ENCODE measurements at regions of chrX and their contacts with region 1.

Region 1: GRCh38 chrX:50204364-50204899 is at the start of gene CCNB3:
- DNase-seq: peak; percentile 33
- ATAC-seq: peak; percentile 71
- H3K4me3 ChIP-seq: peak within 1 kb of the TSS in 1 of 3 experiments; percentile 16; a peak in 1 of 6 replicates
- H3K27ac ChIP-seq: no peak within 1 kb of the TSS
- H3K4me1 ChIP-seq: peaks cover 16% of the 10 kb centered on the region
- H3K27me3 ChIP-seq: no peaks in the 10 kb centered on the region
- CTCF ChIP-seq: peak; percentile 71
- EP300 ChIP-seq: no peak
- POLR2A ChIP-seq: no peak
- RAD21 ChIP-seq: peak; percentile 29; the same call in 1 of the 2 replicates
- total RNA-seq, gene CCNB3: 0.04 and 0.11 TPM in 2 replicates

Region 2: GRCh38 chrX:49915361-49916222 is 288.8 kb before region 1 on chrX:
- CTCF ChIA-PET with region 1: interaction called, 5 read pairs
- POLR2A ChIA-PET with region 1: no interaction called
- in situ Hi-C with region 1: no loop called
- intact Hi-C with region 1: loop called (anchors 5 kb)
- DNase-seq: peak; percentile 33
- ATAC-seq: peak; percentile 76
- H3K4me3 ChIP-seq: no peak overlapping the region
- H3K27ac ChIP-seq: no peak overlapping the region
- H3K4me1 ChIP-seq: peaks cover 34% of the 10 kb centered on the region
- H3K27me3 ChIP-seq: no peaks in the 10 kb centered on the region
- CTCF ChIP-seq: peak; percentile 75
- EP300 ChIP-seq: no peak
- POLR2A ChIP-seq: no peak
- RAD21 ChIP-seq: no peak

Region 3: GRCh38 chrX:50100188-50100587 is 104.2 kb before region 1 on chrX:
- CTCF ChIA-PET with region 1: interaction called, 45 read pairs
- POLR2A ChIA-PET with region 1: no interaction called
- in situ Hi-C with region 1: loop called (anchors 5 kb)
- intact Hi-C with region 1: loop called (anchors 1 kb)
- DNase-seq: peak; percentile 26
- ATAC-seq: peak; percentile 79
- H3K4me3 ChIP-seq: no peak overlapping the region
- H3K27ac ChIP-seq: no peak overlapping the region
- H3K4me1 ChIP-seq: no peaks in the 10 kb centered on the region
- H3K27me3 ChIP-seq: no peaks in the 10 kb centered on the region
- CTCF ChIP-seq: peak; percentile 72
- EP300 ChIP-seq: no peak
- POLR2A ChIP-seq: no peak
- RAD21 ChIP-seq: peak; percentile 76

Region 4: GRCh38 chrX:50107470-50107869 is 97.0 kb before region 1 on chrX:
- CTCF ChIA-PET with region 1: interaction called, 45 read pairs
- POLR2A ChIA-PET with region 1: no interaction called
- in situ Hi-C with region 1: loop called (anchors 5 kb)
- intact Hi-C with region 1: no loop called
- DNase-seq: no peak
- ATAC-seq: no peak
- H3K4me3 ChIP-seq: no peak overlapping the region
- H3K27ac ChIP-seq: no peak overlapping the region
- H3K4me1 ChIP-seq: peaks cover 39% of the 10 kb centered on the region
- H3K27me3 ChIP-seq: no peaks in the 10 kb centered on the region
- CTCF ChIP-seq: no peak
- EP300 ChIP-seq: no peak
- POLR2A ChIP-seq: no peak
- RAD21 ChIP-seq: no peak

Region 5: GRCh38 chrX:50586407-50586806 is 382.0 kb after region 1 on chrX:
- CTCF ChIA-PET with region 1: no interaction called
- POLR2A ChIA-PET with region 1: no interaction called
- in situ Hi-C with region 1: no loop called
- intact Hi-C with region 1: no loop called
- DNase-seq: no peak
- ATAC-seq: no peak
- H3K4me3 ChIP-seq: no peak overlapping the region
- H3K27ac ChIP-seq: no peak overlapping the region
- H3K4me1 ChIP-seq: no peaks in the 10 kb centered on the region
- H3K27me3 ChIP-seq: no peaks in the 10 kb centered on the region
- CTCF ChIP-seq: no peak
- EP300 ChIP-seq: no peak
- POLR2A ChIP-seq: no peak
- RAD21 ChIP-seq: no peak

Region 6: GRCh38 chrX:50812995-50813826 is 608.8 kb after region 1 on chrX:
- CTCF ChIA-PET with region 1: no interaction called
- POLR2A ChIA-PET with region 1: no interaction called
- in situ Hi-C with region 1: no loop called
- intact Hi-C with region 1: no loop called
- DNase-seq: no peak
- ATAC-seq: peak; percentile 82
- H3K4me3 ChIP-seq: peak overlapping the region; percentile 26 to 65 (median 46); a peak in 4 of 6 replicates
- H3K27ac ChIP-seq: no peak overlapping the region
- H3K4me1 ChIP-seq: peaks cover 14% of the 10 kb centered on the region; the same call in 1 of the 2 replicates
- H3K27me3 ChIP-seq: peaks cover 1 to 13% of the 10 kb centered on the region in 2 experiments; a peak in 3 of 5 replicates
- CTCF ChIP-seq: no peak
- EP300 ChIP-seq: no peak
- POLR2A ChIP-seq: no peak
- RAD21 ChIP-seq: no peak

Measured in HepG2 (cell line).